ENCODE measurements at regions of chr1 and their contacts with region 1.

Region 1: DNA sequence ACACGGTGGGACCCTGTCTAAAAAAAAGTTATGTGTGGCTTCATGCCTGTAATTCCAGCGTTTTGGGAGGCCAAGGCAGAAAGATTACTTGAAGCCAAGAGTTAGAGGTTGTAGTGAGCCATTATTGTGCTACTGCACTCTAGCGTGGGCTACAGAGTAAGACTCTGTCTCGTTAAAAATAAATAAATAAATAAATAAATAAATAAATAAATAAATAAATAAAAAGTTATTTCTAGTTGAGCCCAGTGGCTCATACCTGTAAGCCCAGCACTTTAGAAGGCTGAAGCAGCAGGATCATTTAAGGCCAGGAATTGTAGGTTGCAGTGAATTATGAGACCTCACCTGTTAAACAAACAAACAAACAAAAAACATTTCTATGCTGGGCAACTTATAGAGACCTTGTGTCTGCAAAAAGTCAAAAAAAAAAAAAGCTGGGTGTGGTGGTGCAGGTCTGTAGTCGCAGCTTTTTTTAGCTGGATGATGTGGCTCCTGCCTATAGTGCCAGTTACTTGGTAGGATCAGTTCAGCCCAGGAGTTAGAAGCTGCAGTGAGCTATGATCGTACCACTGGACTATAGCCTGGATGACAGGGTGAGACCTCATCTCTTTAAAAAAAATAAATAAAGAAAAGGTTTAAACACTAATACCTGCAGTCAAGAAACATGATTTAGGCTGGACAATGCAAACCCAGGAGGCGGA is 25.6 kb downstream of the GON4L start:
- DNase-seq: no peak
- ATAC-seq: peak in 1 of 2 donors; percentile 65
- H3K4me3 ChIP-seq: no peak overlapping the region
- H3K27ac ChIP-seq: no peak overlapping the region
- H3K4me1 ChIP-seq: peaks cover 3% of the 10 kb centered on the region in 2 donors
- H3K27me3 ChIP-seq: no peaks in the 10 kb centered on the region
- CTCF ChIP-seq: no peak
- POLR2A ChIP-seq: no peak

Region 2: DNA sequence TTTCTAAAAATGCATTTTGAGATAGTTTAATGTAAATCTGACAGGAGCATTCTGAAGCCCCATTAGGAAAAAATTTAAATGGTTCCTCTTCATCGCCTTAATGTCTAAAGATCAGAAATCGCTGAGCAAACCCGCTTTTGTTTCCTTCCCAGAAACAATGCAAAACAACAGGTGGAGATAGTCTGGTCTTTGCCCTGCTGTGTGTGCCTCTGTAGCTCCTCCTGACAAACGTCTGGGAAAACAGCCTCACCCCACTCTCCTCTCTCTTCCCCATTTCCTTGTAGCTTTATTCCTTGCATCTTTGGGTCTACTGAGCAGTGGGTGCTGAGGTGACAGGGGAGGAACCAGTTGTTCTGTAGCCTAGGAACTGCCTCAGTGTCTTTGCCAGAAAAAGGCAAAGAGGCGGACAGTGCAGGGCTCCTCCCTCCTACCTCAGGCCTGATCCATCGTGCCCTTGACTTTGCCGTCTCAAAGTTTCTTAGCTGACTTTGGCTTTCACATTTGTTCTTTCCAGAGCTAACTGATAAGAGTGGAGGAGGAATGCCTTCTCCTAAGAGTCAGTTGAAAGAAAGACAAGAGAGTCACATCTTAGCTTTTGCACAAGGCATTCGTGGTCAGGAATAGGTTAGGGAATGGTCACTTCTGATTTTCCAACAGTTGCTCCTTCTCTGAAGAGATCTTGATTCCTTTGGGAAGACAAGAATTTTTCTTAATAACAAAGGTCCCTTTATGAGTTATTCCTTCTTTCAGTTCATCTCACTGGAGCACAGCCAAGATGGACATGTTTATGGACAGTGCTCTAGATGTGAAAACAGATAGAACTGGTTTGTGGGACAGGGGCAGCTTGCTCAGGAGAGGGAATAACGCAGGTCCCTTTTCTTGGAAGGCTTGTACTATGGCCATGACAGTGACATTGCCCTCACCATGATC is 52.9 kb after region 1 on chr1:
- in situ Hi-C with region 1: no loop called
- intact Hi-C with region 1: loop called (anchors 2 kb)
- DNase-seq: no peak
- ATAC-seq: no peak
- H3K4me3 ChIP-seq: no peak overlapping the region
- H3K27ac ChIP-seq: no peak overlapping the region
- H3K4me1 ChIP-seq: no peaks in the 10 kb centered on the region
- H3K27me3 ChIP-seq: no peaks in the 10 kb centered on the region
- CTCF ChIP-seq: no peak
- POLR2A ChIP-seq: no peak

Region 3: GRCh38 chr1:155934097-155934935 is 102.9 kb after region 1 on chr1 and contains the start of gene KHDC4:
- in situ Hi-C with region 1: no loop called
- intact Hi-C with region 1: no loop called
- DNase-seq: peak; percentile 95 to 96
- ATAC-seq: peak; percentile 99 to 100
- H3K4me3 ChIP-seq: peak within 1 kb of the TSS; percentile 85 to 96 (median 90)
- H3K27ac ChIP-seq: peak within 1 kb of the TSS; percentile 93 to 95 (median 94)
- H3K4me1 ChIP-seq: peaks cover 47 to 51% of the 10 kb centered on the region in 2 donors
- H3K27me3 ChIP-seq: no peaks in the 10 kb centered on the region
- CTCF ChIP-seq: peak in 3 of 5 experiments; percentile 24 to 36 (median 26)
- POLR2A ChIP-seq: peak; percentile 91 to 96
- total RNA-seq, gene KHDC4: 18.2 to 46.3 (median 26.3) TPM

Region 4: GRCh38 chr1:157347506-157347905 is 1516.1 kb after region 1 on chr1:
- in situ Hi-C with region 1: no loop called
- intact Hi-C with region 1: no loop called
- DNase-seq: no peak
- ATAC-seq: no peak
- H3K4me3 ChIP-seq: no peak overlapping the region
- H3K27ac ChIP-seq: no peak overlapping the region
- H3K4me1 ChIP-seq: no peaks in the 10 kb centered on the region
- H3K27me3 ChIP-seq: no peaks in the 10 kb centered on the region
- CTCF ChIP-seq: no peak
- POLR2A ChIP-seq: no peak

Measured in gastrocnemius medialis (tissue), 4 donors.